RWPE1 (cell line): ENCODE measurements at regions of chr1 and their contacts with region 1.

Region 1: DNA sequence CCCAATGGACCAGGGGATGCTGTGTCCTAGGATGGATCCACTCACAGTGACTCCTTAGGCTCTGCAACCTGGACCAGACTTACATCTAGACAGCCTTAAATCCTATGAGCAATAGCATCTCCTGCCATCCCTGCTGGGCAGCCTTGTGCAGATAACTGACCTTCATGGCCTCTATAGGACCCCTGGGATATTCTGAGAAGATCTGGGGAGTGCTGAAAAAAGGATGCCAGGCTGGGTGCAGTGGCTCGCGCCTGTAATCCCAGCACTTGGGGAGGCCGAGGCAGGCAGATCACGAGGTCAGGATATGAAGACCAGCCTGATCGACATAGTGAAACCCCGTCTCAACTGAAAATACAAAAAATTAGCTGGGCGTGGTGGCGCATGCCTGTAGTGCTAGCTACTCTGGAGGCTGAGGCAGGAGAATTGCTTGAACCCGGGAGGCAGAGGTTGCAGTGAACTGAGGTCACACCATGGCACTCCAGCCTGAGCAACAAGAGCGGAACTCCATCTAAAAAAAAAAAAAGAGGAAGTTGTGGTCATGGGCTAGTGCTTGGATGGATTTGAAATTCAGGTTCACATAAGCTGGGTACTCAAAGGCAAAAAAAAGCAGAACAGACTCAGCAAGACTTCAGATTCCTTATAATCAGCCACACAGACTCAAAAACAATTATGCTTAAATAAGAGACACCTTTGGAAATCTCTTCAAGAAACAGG is 10.9 kb upstream of the SH2D1B start:
- DNase-seq: no peak
- H3K27ac ChIP-seq: no peak overlapping the region
- CTCF ChIP-seq: no peak

Region 2: DNA sequence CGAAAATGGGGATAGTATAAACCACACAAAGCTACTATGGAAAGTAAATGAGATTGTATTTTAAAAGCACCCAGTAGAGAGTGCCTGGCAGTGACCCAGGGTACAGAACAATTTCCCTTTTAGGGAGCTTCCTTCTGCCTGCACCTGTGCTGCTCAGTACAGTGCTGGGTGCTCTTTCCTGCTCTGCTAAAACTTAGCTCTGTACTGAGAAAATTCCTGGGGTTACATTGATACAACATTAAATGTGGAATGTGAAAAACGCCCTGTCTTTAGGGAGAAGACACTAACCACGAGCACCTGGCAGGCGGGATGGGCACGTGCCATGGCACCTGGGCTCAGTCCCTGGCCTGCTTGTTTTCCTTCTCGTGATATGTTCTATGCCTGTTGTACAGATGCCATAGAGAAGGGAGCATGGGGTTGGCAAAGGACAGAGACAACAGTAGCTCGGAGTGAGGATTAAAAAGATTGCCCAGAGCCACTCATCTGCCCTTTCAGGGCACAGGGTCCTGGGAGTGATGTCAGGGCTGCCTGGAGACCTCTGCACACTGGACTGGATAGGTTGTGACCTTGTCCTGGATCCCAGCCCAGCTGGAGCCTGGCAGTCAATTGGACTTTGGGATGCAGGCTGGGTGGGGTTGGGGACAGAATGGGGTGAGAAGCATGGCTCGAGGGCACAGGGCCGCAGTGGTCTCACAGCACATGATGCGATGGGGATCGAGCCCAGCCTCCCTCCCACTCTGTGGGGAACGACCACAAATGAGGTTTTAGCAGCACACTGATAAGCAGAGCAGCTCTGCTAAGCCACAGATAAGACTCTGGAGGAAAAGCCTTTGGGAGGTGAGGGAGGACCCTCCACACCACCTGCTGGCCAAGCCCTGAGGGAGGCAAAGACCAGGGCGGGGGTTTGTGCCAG is 50.4 kb before region 1 on chr1:
- CTCF ChIA-PET with region 1: no interaction called
- POLR2A ChIA-PET with region 1: no interaction called
- DNase-seq: no peak
- H3K27ac ChIP-seq: peak overlapping the region; percentile 75
- CTCF ChIP-seq: no peak

Region 3: GRCh38 chr1:162456324-162456723 is 33.5 kb after region 1 on chr1:
- CTCF ChIA-PET with region 1: no interaction called
- POLR2A ChIA-PET with region 1: no interaction called
- DNase-seq: no peak
- H3K27ac ChIP-seq: no peak overlapping the region
- CTCF ChIP-seq: no peak

Region 4: DNA sequence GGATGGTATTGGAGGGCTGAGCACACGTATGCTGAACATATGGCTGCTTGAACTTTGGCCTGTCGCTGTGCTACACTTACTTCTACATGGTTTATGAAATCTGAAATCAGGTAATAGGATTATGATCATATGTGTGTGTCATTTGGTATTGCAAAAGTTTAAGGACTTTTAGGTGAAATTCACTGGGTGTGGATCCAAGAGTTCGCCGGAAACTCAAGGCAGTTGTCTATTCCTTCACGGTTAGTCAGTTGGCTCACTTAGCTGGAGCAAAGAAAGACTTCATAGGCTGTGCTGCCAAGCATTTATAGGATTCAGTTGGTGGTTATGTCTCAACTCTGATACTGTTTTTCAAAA is 139.6 kb after region 1 on chr1:
- CTCF ChIA-PET with region 1: no interaction called
- POLR2A ChIA-PET with region 1: interaction called, 10 read pairs
- DNase-seq: peak; percentile 21
- H3K27ac ChIP-seq: peak overlapping the region; percentile 93
- CTCF ChIP-seq: no peak